A673 (cell line): ENCODE measurements at regions of chr1 and their contacts with region 1.

Region 1: GRCh38 chr1:166544561-166544960 is 294.7 kb upstream of the POGK start:
- DNase-seq: no peak
- H3K4me3 ChIP-seq: no peak overlapping the region
- H3K27ac ChIP-seq: no peak overlapping the region
- H3K4me1 ChIP-seq: no peaks in the 10 kb centered on the region
- H3K27me3 ChIP-seq: no peaks in the 10 kb centered on the region
- CTCF ChIP-seq: no peak

Region 2: DNA sequence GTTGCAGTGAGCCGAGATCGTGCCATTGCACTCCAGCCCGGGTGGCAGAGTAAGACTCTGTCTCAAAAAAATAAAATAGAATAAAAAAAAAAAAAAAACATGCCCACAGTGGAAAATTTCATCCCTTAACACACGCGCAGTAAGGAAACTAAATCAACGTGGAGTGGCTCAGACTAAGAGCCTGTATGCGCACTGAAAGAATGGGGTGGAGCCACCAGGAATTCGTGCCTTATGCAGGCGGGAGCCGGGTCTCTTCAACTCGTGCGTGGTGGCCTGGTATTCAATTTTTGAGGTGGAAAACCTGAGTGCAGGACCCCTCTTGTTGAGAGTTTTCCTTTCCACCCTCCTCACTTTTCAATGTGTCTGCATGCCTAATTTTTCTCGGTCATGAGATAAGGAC is 1031.1 kb after region 1 on chr1:
- CTCF ChIA-PET with region 1: no interaction called
- POLR2A ChIA-PET with region 1: interaction called, 12 read pairs
- intact Hi-C with region 1: no loop called
- DNase-seq: no peak
- H3K4me3 ChIP-seq: no peak overlapping the region
- H3K27ac ChIP-seq: no peak overlapping the region
- H3K4me1 ChIP-seq: no peaks in the 10 kb centered on the region
- H3K27me3 ChIP-seq: peaks cover 13% of the 10 kb centered on the region
- CTCF ChIP-seq: no peak